ENCODE measurements at regions of chr18 and their contacts with region 1.

Region 1: DNA sequence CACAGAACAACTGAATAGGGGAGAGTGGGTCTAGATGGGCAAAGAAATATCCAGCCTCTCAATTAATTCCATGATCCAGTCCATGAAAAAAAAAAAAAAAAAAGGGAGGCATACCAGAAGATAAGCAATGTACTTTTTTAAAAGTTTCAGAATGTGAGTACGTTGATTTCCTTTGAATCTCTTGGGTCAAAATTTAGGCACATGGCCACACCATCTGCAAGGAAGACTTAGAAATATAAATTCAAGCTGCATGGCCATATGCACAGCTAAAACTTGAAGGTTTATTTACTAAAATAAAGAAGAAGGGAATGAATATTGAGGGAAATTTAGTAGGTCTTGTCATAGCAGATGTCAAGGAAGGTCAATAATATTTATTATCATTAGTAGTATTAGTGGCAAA is 286.5 kb upstream of the CDH7 start:
- DNase-seq: no peak
- ATAC-seq: no peak
- H3K4me3 ChIP-seq: no peak overlapping the region
- H3K27ac ChIP-seq: no peak overlapping the region
- H3K4me1 ChIP-seq: no peaks in the 10 kb centered on the region
- H3K27me3 ChIP-seq: no peaks in the 10 kb centered on the region
- CTCF ChIP-seq: no peak
- POLR2A ChIP-seq: no peak
- RAD21 ChIP-seq: no peak

Region 2: DNA sequence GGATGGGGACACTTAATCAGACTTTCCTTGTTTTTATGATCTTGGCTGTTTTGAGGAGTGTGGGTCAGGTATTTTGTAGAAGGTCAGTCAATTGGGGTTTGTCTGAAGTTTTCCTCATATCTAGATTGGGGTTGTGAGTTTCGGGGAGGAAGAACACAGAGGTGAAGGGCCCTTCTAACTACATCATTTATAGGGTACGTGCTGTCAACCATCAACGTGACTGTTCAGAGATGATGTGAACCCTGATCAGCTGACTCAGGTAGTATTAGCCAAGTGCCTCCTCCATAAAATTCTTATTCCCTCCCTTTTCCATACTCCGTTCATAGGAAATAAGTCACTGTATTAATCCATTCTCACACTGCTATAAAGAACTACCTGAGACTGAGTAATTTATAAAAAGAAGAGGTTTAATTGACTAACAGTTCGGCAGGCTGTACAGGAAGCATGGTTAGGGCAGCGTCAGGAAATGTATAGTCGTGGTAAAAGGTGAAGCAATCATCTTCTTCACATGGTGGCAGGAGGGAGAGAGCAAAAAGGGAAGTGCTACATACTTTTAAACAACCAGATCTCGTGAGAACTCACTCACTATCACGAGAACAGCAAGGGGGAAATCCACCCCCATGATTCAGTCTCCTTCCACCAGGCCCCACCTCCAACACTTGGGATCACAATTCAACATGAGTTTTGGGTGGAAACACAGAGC is 768.4 kb before region 1 on chr18:
- CTCF ChIA-PET with region 1: no interaction called
- POLR2A ChIA-PET with region 1: no interaction called
- dilution Hi-C with region 1: no loop called
- in situ Hi-C with region 1: no loop called
- intact Hi-C with region 1: no loop called
- DNase-seq: no peak
- ATAC-seq: no peak
- H3K4me3 ChIP-seq: no peak overlapping the region
- H3K27ac ChIP-seq: no peak overlapping the region
- H3K4me1 ChIP-seq: no peaks in the 10 kb centered on the region
- H3K27me3 ChIP-seq: no peaks in the 10 kb centered on the region
- CTCF ChIP-seq: no peak
- POLR2A ChIP-seq: no peak
- RAD21 ChIP-seq: no peak

Region 3: GRCh38 chr18:65477455-65477854 is 13.1 kb after region 1 on chr18:
- CTCF ChIA-PET with region 1: no interaction called
- POLR2A ChIA-PET with region 1: no interaction called
- dilution Hi-C with region 1: no loop called
- in situ Hi-C with region 1: no loop called
- intact Hi-C with region 1: loop called (anchors 1 kb)
- DNase-seq: no peak
- ATAC-seq: no peak
- H3K4me3 ChIP-seq: no peak overlapping the region
- H3K27ac ChIP-seq: no peak overlapping the region
- H3K4me1 ChIP-seq: no peaks in the 10 kb centered on the region
- H3K27me3 ChIP-seq: no peaks in the 10 kb centered on the region
- CTCF ChIP-seq: no peak
- POLR2A ChIP-seq: no peak
- RAD21 ChIP-seq: no peak